BJ (cell line): ENCODE measurements at regions of chr10 and their contacts with region 1.

Region 1: GRCh38 chr10:48289501-48290238 is 15.2 kb upstream of the FRMPD2 start:
- DNase-seq: no peak
- H3K4me3 ChIP-seq: no peak overlapping the region
- H3K27me3 ChIP-seq: peaks cover 6% of the 10 kb centered on the region
- CTCF ChIP-seq: peak; percentile 80

Region 2: GRCh38 chr10:48215488-48216204 is 74.0 kb before region 1 on chr10:
- CTCF ChIA-PET with region 1: interaction called, 10 read pairs
- POLR2A ChIA-PET with region 1: no interaction called
- DNase-seq: no peak
- H3K4me3 ChIP-seq: no peak overlapping the region
- H3K27me3 ChIP-seq: peaks cover 2% of the 10 kb centered on the region; the same call in 1 of the 2 replicates
- CTCF ChIP-seq: peak; percentile 82

Region 3: DNA sequence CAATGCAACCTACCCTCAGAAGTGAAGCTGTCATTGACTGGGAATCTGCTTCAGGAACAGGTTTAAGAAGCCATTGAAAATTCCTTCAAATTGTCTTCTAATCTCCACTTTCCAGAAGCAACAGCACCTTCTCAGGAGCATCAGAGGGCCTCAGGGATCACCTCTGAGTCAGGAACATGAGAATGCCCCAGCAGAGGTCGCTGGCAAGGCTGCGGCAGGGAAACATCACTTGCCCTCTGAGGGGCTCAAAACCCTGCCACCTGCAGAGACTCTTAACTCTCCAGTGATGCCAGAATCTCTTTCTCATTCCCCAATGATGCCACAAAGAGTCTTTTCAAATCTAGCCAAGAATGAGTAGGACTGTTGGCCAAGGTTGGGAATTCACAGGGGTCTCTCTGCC is 10.9 kb after region 1 on chr10:
- CTCF ChIA-PET with region 1: interaction called, 24 read pairs
- POLR2A ChIA-PET with region 1: no interaction called
- DNase-seq: no peak
- H3K4me3 ChIP-seq: no peak overlapping the region
- H3K27me3 ChIP-seq: peaks cover 12% of the 10 kb centered on the region
- CTCF ChIP-seq: no peak

Region 4: DNA sequence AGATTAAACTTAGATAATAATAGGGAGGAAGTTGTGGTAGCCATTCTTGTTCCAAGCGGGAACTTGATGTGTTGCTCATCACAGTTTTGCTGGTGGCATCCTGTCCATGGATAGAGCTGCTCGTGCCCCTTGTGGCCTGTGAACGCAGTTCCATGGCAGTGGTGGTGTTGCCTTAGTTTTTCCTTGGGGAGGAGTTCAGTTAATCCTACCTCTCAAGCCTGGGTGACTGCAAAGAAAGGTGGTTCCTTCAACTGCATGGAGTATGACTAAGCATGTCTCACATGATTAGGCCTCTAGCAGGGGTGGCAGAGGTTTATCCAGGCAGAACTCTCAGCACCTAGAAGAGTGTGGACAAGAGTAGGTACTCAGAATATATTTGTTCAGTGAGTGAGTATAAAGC is 116.5 kb after region 1 on chr10:
- CTCF ChIA-PET with region 1: no interaction called
- POLR2A ChIA-PET with region 1: no interaction called
- DNase-seq: no peak
- H3K4me3 ChIP-seq: no peak overlapping the region
- H3K27me3 ChIP-seq: no peaks in the 10 kb centered on the region
- CTCF ChIP-seq: no peak